ENCODE measurements at regions of chr1 and their contacts with region 1.

Region 1: GRCh38 chr1:67194209-67194863 is 28.1 kb downstream of the IL23R start:
- DNase-seq: no peak
- H3K4me3 Mint-ChIP-seq: no peak overlapping the region
- H3K27ac Mint-ChIP-seq: peak overlapping the region; percentile 79
- H3K4me1 Mint-ChIP-seq: peaks cover 28% of the 10 kb centered on the region
- H3K27me3 Mint-ChIP-seq: peaks cover 5% of the 10 kb centered on the region

Region 2: GRCh38 chr1:67162957-67163356 is 31.4 kb before region 1 on chr1:
- CTCF ChIA-PET with region 1: interaction called, 6 read pairs
- POLR2A ChIA-PET with region 1: interaction called, 11 read pairs
- intact Hi-C with region 1: loop called (anchors 1 kb)
- DNase-seq: peak; percentile 78
- H3K4me3 Mint-ChIP-seq: peak overlapping the region; percentile 30
- H3K27ac Mint-ChIP-seq: peak overlapping the region; percentile 73
- H3K4me1 Mint-ChIP-seq: peaks cover 56% of the 10 kb centered on the region
- H3K27me3 Mint-ChIP-seq: peaks cover 5% of the 10 kb centered on the region

Region 3: DNA sequence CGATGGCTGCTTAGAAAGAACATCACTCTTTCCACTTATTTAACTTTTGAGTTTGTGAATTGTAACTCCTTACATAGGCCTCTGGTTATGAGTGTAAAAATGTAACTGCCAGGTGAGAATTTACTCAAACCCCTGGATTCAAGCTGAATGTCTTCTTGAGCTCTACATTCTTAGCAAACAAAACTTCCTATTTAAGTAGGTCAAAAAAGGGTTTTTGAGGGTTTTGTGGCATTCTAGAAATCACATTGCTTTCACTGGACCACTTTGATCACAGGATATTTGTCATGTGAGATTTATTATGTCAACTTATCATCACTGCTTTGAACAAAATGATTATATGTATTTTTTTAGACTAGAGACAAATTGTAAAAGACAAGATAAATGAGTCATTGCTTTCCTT is 22.4 kb before region 1 on chr1:
- CTCF ChIA-PET with region 1: interaction called, 19 read pairs
- POLR2A ChIA-PET with region 1: interaction called, 48 read pairs
- intact Hi-C with region 1: loop called (anchors 1 kb)
- DNase-seq: no peak
- H3K4me3 Mint-ChIP-seq: peak overlapping the region; percentile 74
- H3K27ac Mint-ChIP-seq: peak overlapping the region; percentile 99
- H3K4me1 Mint-ChIP-seq: peaks cover 72% of the 10 kb centered on the region
- H3K27me3 Mint-ChIP-seq: peaks cover 5% of the 10 kb centered on the region

Measured in activated CD4-positive, alpha-beta memory T cell treated with anti-CD3 and anti-CD28 coated beads for 36 hours (primary cell).